ENCODE measurements at regions of chr5 and their contacts with region 1.

Region 1: DNA sequence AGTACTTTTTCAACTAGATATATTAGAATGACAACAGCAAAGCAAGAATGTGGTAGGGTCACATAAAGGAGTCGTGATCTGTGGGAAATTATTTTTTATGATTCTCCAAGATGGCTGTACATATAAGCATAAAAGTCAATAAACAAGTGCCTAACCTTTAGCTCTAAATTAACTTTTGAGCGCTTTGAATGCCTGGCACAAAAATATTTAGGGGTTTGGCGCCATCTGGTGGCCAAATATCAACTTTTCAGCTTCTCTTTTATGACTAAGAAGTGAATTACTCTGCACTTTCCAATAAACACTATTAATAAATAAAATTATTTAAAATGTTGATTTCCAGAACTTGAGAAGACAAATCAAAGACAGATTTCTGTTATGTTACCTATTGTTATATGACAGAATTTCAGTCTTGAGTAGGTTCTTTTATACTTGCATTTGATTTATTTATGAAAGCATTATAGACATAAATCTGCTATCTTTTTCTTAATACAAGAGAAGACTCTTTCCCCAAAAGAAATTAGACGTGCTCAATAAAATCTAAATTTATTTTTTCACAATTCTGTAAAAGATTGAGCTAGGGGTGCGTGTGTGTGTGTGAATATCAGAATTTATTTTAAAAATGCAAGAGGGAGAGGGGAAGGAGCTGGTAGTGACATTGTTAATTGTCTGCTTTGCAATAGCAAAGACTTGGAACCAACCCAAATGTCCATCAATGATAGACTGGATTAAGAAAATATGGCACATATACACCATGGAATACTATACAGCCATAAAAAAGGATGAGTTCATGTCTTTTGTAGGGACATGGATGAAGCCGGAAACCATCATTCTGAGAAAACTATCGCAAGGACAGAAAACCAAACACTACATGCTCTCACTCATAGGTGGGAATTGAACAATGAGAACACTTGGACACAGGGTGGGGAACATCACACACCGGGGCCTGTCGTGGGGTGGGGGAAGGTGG is 36.7 kb upstream of the ARRDC3 start:
- DNase-seq: peak; percentile 32
- ATAC-seq: peak; percentile 69
- H3K4me3 ChIP-seq: no peak overlapping the region
- H3K27ac ChIP-seq: no peak overlapping the region
- H3K4me1 ChIP-seq: peaks cover 2% of the 10 kb centered on the region
- H3K27me3 ChIP-seq: no peaks in the 10 kb centered on the region
- CTCF ChIP-seq: peak; percentile 66; the same call in 1 of the 2 replicates

Region 2: DNA sequence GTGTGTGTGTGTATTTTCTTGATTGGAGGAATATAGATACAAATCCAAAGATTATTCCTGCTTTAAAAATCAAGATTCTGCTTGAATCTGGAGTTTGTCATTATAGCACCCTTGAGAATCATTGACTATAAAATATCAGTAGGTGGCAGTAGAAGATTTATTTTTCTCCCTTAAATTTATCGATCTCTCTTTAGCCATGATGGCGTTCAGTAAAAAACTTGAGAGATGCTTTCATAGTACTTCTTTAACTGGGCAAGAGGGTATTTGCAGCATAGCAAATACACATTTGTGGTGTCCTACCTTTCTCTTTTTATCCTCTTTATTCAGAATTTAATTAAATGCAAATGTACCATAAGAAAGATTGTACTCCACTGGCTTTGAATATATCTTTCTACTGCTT is 553.5 kb before region 1 on chr5:
- CTCF ChIA-PET with region 1: interaction called, 6 read pairs
- POLR2A ChIA-PET with region 1: no interaction called
- in situ Hi-C with region 1: no loop called
- intact Hi-C with region 1: loop called (anchors 2 kb)
- DNase-seq: peak; percentile 17
- ATAC-seq: peak; percentile 80; the same call in 1 of the 2 replicates
- H3K4me3 ChIP-seq: no peak overlapping the region
- H3K27ac ChIP-seq: no peak overlapping the region
- H3K4me1 ChIP-seq: no peaks in the 10 kb centered on the region
- H3K27me3 ChIP-seq: peaks cover 2% of the 10 kb centered on the region; the same call in 1 of the 2 replicates
- CTCF ChIP-seq: peak; percentile 56; the same call in 1 of the 2 replicates

Region 3: GRCh38 chr5:90932052-90932699 is 487.7 kb before region 1 on chr5:
- CTCF ChIA-PET with region 1: no interaction called
- POLR2A ChIA-PET with region 1: no interaction called
- in situ Hi-C with region 1: no loop called
- intact Hi-C with region 1: loop called (anchors 2 kb)
- DNase-seq: peak; percentile 48
- ATAC-seq: peak; percentile 70; the same call in 1 of the 2 replicates
- H3K4me3 ChIP-seq: no peak overlapping the region
- H3K27ac ChIP-seq: peak overlapping the region; percentile 65; the same call in 1 of the 2 replicates
- H3K4me1 ChIP-seq: no peaks in the 10 kb centered on the region; the same call in 1 of the 2 replicates
- H3K27me3 ChIP-seq: no peaks in the 10 kb centered on the region
- CTCF ChIP-seq: peak; percentile 79; the same call in 1 of the 2 replicates

Region 4: GRCh38 chr5:91101600-91102379 is 318.1 kb before region 1 on chr5:
- CTCF ChIA-PET with region 1: interaction called, 3 read pairs
- POLR2A ChIA-PET with region 1: no interaction called
- in situ Hi-C with region 1: no loop called
- intact Hi-C with region 1: loop called (anchors 5 kb)
- DNase-seq: peak; percentile 67
- ATAC-seq: peak; percentile 98
- H3K4me3 ChIP-seq: no peak overlapping the region
- H3K27ac ChIP-seq: no peak overlapping the region
- H3K4me1 ChIP-seq: 0 out of 2 replicates have a peak, but pooled peaks cover 3% of the 10 kb centered on the region
- H3K27me3 ChIP-seq: no peaks in the 10 kb centered on the region
- CTCF ChIP-seq: peak; percentile 86

Region 5: DNA sequence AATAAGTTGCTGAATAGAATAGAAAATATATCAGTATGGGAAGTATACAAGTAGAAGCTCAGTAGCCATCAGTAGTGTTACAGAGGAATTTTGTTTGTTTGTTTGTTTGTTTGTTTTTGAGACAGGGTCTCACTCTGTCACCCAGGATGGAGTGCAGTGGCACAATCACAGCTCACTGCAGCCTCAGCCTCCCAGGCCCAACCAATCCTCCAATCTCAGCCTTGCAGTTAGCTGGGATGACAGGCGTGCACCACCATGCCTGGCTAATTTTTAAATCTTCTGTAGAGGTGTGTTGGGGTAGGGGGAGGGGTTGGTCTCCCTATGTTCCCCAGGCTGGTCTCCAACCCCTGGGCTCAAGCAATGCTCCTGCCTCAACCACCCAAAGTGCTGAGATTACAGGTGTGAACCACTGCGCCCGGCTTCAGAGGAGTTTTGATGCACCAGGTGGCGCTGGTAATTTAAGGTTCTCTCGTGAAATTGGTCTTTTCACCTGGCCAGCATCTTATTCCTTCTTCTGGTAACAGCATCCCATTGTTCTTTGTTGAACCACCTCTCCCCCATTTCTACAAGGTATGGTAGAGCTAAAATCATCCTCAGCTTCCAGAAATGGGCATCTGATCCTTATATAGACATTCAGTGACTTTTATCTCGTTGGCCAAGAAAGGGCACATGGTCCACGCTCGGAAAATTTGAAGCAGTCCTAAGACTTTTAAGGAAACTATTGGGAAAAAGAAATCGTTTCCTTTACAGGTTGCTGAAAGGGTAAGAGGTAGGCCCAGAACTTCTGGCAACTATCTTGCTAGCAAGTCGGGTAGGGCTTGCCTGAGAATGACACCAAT is 193.8 kb before region 1 on chr5:
- CTCF ChIA-PET with region 1: no interaction called
- POLR2A ChIA-PET with region 1: no interaction called
- in situ Hi-C with region 1: no loop called
- intact Hi-C with region 1: loop called (anchors 1 kb)
- DNase-seq: peak; percentile 38
- ATAC-seq: peak; percentile 89
- H3K4me3 ChIP-seq: no peak overlapping the region
- H3K27ac ChIP-seq: no peak overlapping the region
- H3K4me1 ChIP-seq: no peaks in the 10 kb centered on the region
- H3K27me3 ChIP-seq: no peaks in the 10 kb centered on the region
- CTCF ChIP-seq: peak; percentile 80

Region 6: GRCh38 chr5:91535499-91535898 is 115.6 kb after region 1 on chr5:
- CTCF ChIA-PET with region 1: no interaction called
- POLR2A ChIA-PET with region 1: no interaction called
- in situ Hi-C with region 1: no loop called
- intact Hi-C with region 1: no loop called
- DNase-seq: no peak
- ATAC-seq: no peak
- H3K4me3 ChIP-seq: no peak overlapping the region
- H3K27ac ChIP-seq: no peak overlapping the region
- H3K4me1 ChIP-seq: no peaks in the 10 kb centered on the region
- H3K27me3 ChIP-seq: no peaks in the 10 kb centered on the region
- CTCF ChIP-seq: no peak